PC-9 (cell line): ENCODE measurements at regions of chr3 and their contacts with region 1.

Region 1: GRCh38 chr3:36700537-36701248 is 63.7 kb downstream of the DCLK3 start:
- DNase-seq: peak; percentile 51 to 55
- H3K4me3 ChIP-seq: no peak overlapping the region
- H3K27ac ChIP-seq: no peak overlapping the region
- H3K4me1 ChIP-seq: peaks cover 18% of the 10 kb centered on the region
- H3K27me3 ChIP-seq: no peaks in the 10 kb centered on the region
- CTCF ChIP-seq: peak; percentile 91

Region 2: DNA sequence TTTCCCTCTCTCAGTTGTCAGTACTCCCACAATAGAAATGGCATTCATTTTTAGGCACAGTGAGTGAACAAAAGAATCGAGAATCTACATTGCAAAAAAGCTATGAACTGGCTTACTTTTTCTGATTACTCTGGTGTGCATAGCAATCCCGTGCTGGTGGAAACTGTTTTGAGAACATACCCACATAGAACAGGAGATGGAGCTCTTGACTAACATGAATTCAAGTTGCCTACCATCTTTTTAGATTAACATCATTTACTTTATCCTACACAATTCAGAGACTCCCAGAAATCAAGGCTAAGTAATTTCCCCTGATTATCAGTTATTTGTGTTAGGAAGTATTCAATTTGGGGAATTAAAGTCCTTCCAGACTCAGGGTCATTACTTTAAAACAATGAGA is 734.8 kb before region 1 on chr3:
- CTCF ChIA-PET with region 1: interaction called, 4 read pairs
- POLR2A ChIA-PET with region 1: no interaction called
- intact Hi-C with region 1: loop called (anchors 1 kb)
- DNase-seq: peak in 1 of 2 experiments; percentile 43
- H3K4me3 ChIP-seq: no peak overlapping the region
- H3K27ac ChIP-seq: no peak overlapping the region
- H3K4me1 ChIP-seq: no peaks in the 10 kb centered on the region
- H3K27me3 ChIP-seq: no peaks in the 10 kb centered on the region
- CTCF ChIP-seq: peak; percentile 66

Region 3: GRCh38 chr3:36124118-36124796 is 576.4 kb before region 1 on chr3:
- CTCF ChIA-PET with region 1: no interaction called
- POLR2A ChIA-PET with region 1: no interaction called
- intact Hi-C with region 1: loop called (anchors 1 kb)
- DNase-seq: peak; percentile 40 to 58
- H3K4me3 ChIP-seq: no peak overlapping the region
- H3K27ac ChIP-seq: no peak overlapping the region
- H3K4me1 ChIP-seq: no peaks in the 10 kb centered on the region
- H3K27me3 ChIP-seq: no peaks in the 10 kb centered on the region
- CTCF ChIP-seq: peak; percentile 80

Region 4: GRCh38 chr3:36393563-36393962 is 307.1 kb before region 1 on chr3:
- CTCF ChIA-PET with region 1: interaction called, 14 read pairs
- POLR2A ChIA-PET with region 1: no interaction called
- intact Hi-C with region 1: loop called (anchors 10 kb)
- DNase-seq: no peak
- H3K4me3 ChIP-seq: no peak overlapping the region
- H3K27ac ChIP-seq: no peak overlapping the region
- H3K4me1 ChIP-seq: no peaks in the 10 kb centered on the region
- H3K27me3 ChIP-seq: no peaks in the 10 kb centered on the region
- CTCF ChIP-seq: no peak

Region 5: GRCh38 chr3:36434687-36435426 is 265.8 kb before region 1 on chr3:
- CTCF ChIA-PET with region 1: no interaction called
- POLR2A ChIA-PET with region 1: no interaction called
- intact Hi-C with region 1: no loop called
- DNase-seq: no peak
- H3K4me3 ChIP-seq: no peak overlapping the region
- H3K27ac ChIP-seq: no peak overlapping the region
- H3K4me1 ChIP-seq: no peaks in the 10 kb centered on the region
- H3K27me3 ChIP-seq: no peaks in the 10 kb centered on the region
- CTCF ChIP-seq: no peak

Region 6: GRCh38 chr3:36591959-36592358 is 108.7 kb before region 1 on chr3:
- CTCF ChIA-PET with region 1: no interaction called
- POLR2A ChIA-PET with region 1: no interaction called
- intact Hi-C with region 1: loop called (anchors 5 kb)
- DNase-seq: no peak
- H3K4me3 ChIP-seq: no peak overlapping the region
- H3K27ac ChIP-seq: no peak overlapping the region
- H3K4me1 ChIP-seq: peaks cover under 1% of the 10 kb centered on the region; the same call in 1 of the 2 replicates
- H3K27me3 ChIP-seq: no peaks in the 10 kb centered on the region
- CTCF ChIP-seq: peak; percentile 32; the same call in 1 of the 2 replicates

Region 7: GRCh38 chr3:36648241-36649034 is 52.3 kb before region 1 on chr3:
- CTCF ChIA-PET with region 1: no interaction called
- POLR2A ChIA-PET with region 1: no interaction called
- intact Hi-C with region 1: loop called (anchors 5 kb)
- DNase-seq: peak; percentile 22 to 93
- H3K4me3 ChIP-seq: peak overlapping the region; percentile 2; the same call in 1 of the 2 replicates
- H3K27ac ChIP-seq: peak overlapping the region; percentile 95
- H3K4me1 ChIP-seq: peaks cover 34% of the 10 kb centered on the region
- H3K27me3 ChIP-seq: no peaks in the 10 kb centered on the region
- CTCF ChIP-seq: no peak

Region 8: GRCh38 chr3:36677331-36678007 is 23.2 kb before region 1 on chr3:
- CTCF ChIA-PET with region 1: interaction called, 6 read pairs
- POLR2A ChIA-PET with region 1: no interaction called
- intact Hi-C with region 1: loop called (anchors 2 kb)
- DNase-seq: peak; percentile 78 to 99
- H3K4me3 ChIP-seq: no peak overlapping the region
- H3K27ac ChIP-seq: peak overlapping the region; percentile 98
- H3K4me1 ChIP-seq: peaks cover 33% of the 10 kb centered on the region
- H3K27me3 ChIP-seq: no peaks in the 10 kb centered on the region
- CTCF ChIP-seq: 0 out of 2 replicates have a peak, but pooled peaks have one; percentile 37